Caco-2 (cell line): ENCODE measurements at regions of chr9 and their contacts with region 1.

Region 1: DNA sequence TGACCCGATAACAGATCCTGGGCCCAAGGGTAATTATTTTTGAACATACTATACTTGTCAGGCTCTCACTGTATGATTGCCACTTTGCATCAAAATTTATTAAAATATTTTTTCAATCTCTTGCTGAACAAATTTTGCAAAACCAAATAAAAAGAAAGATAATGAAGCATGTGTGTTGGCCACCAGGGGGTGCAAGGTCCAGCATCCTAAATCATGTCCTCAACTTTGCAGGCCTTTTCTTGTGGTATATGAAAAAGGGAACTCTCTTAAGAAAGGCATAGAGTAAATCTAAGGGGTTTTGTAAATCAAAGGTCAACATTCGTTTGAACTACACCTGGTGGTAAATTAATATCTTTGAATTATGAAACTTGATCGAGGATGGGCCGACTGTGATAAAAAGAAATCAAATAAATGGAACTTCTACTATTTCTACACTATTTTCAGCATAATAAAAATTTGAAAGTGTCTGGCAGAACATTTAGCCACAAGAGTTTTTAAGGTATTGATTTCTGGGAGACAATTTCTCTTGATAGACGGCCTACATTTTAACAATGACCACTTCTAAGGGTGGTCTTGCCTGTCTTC is 676.5 kb downstream of the DMRTA1 start:
- DNase-seq: peak in 1 of 2 experiments; percentile 38
- H3K4me3 ChIP-seq: no peak overlapping the region
- H3K4me3 Mint-ChIP-seq: no peak overlapping the region
- H3K27ac Mint-ChIP-seq: no peak overlapping the region
- H3K4me1 ChIP-seq: no peaks in the 10 kb centered on the region
- H3K4me1 Mint-ChIP-seq: no peaks in the 10 kb centered on the region
- H3K27me3 ChIP-seq: no peaks in the 10 kb centered on the region
- H3K27me3 Mint-ChIP-seq: no peaks in the 10 kb centered on the region
- CTCF ChIP-seq: peak; percentile 45 to 52

Region 2: DNA sequence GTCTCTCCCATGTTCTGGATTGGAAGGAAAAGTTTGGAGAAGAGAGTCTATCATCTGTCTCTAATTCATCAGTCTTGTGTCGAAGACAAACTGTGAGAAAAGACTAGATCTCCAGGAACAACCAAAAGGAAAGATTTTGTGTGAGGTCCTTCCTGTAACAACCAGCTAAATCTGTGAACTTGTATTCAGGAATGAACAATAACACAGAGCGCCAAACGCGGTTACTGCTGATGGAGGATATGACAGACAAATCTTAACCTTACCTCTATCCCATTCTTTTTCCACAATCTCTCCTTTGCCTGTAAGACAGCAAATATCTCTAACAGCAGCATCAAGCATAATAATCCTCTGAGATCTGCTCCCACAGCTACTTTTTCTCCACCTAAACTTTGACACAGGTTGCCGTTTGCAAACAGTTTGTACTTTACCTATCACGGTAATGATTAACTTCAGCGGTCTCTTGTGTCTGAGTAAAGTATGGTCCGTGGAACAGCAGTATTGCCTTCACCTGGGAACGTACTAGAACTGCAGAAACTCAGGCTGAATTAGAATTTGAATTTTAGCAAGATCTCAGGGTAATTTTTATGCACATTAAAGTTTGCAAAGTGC is 315.3 kb after region 1 on chr9:
- CTCF ChIA-PET with region 1: no interaction called
- POLR2A ChIA-PET with region 1: no interaction called
- intact Hi-C with region 1: loop called (anchors 2 kb)
- DNase-seq: no peak
- H3K4me3 ChIP-seq: no peak overlapping the region
- H3K4me3 Mint-ChIP-seq: no peak overlapping the region
- H3K27ac Mint-ChIP-seq: no peak overlapping the region
- H3K4me1 ChIP-seq: no peaks in the 10 kb centered on the region
- H3K4me1 Mint-ChIP-seq: no peaks in the 10 kb centered on the region
- H3K27me3 ChIP-seq: no peaks in the 10 kb centered on the region
- H3K27me3 Mint-ChIP-seq: no peaks in the 10 kb centered on the region
- CTCF ChIP-seq: no peak